ENCODE measurements at regions of chr4 and their contacts with region 1.

Region 1: GRCh38 chr4:108018040-108018883 is 28.6 kb downstream of the HADH start:
- DNase-seq: no peak
- ATAC-seq: peak; percentile 95
- H3K4me3 ChIP-seq: no peak overlapping the region
- H3K27ac ChIP-seq: no peak overlapping the region
- H3K4me1 ChIP-seq: no peaks in the 10 kb centered on the region
- H3K27me3 ChIP-seq: no peaks in the 10 kb centered on the region
- CTCF ChIP-seq: peak; percentile 80 to 90 (median 88)
- EP300 ChIP-seq: no peak
- POLR2A ChIP-seq: no peak
- RAD21 ChIP-seq: peak; percentile 95

Region 2: GRCh38 chr4:107824353-107825071 is 193.8 kb before region 1 on chr4 and contains the start of gene SGMS2:
- CTCF ChIA-PET with region 1: no interaction called
- POLR2A ChIA-PET with region 1: no interaction called
- RAD21 ChIA-PET with region 1: no interaction called
- SMC1A ChIA-PET with region 1: no interaction called
- in situ Hi-C with region 1: no loop called
- intact Hi-C with region 1: no loop called
- DNase-seq: no peak
- ATAC-seq: peak; percentile 49; the same call in 2 of the 3 replicates
- H3K4me3 ChIP-seq: no peak within 1 kb of the TSS
- H3K27ac ChIP-seq: no peak within 1 kb of the TSS
- H3K4me1 ChIP-seq: no peaks in the 10 kb centered on the region
- H3K27me3 ChIP-seq: peaks cover 5 to 15% of the 10 kb centered on the region in 2 experiments
- CTCF ChIP-seq: no peak
- EP300 ChIP-seq: no peak
- POLR2A ChIP-seq: no peak
- RAD21 ChIP-seq: no peak
- polyA plus RNA-seq, gene SGMS2: 0.11 TPM in 1 of 2 experiments, not detected in the other

Region 3: DNA sequence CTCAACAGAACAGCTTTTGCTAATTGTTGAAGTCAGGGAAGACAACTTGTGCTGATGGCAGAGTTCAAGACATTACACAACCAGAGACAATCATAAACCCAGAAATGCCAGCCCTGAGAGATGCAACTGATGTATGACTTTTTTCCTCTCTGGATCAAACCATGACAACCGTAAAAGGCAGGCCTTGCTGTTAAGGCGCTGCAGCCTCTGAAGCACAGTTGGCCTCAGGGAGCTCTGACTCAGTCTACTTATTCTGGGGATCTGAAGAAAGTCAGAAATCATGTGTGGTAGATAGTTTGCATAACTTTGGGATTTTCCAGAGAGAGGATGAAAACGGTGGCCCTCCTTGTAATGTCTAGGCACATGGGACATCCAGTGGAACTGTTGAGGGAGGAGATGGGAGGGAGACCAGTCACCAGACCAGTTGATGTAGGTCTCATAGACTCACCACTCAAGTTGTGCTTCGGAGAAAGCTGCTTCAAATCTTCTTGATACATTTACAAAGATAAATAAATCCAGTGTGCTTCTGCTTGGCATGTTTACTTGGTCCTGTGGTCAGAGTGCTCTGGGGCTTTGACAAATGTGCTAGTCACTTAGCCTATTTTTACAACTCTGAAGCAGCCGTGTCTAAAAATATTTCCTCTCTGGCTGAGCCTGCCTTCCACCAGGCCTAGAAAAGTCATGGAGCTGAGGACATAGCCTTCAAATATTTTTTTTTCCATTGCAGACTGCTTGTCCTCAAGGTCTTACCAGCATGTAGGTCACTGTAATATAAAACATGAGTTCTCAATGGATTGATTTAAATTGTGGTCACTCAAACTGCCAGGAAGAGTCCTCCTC is 21.1 kb before region 1 on chr4:
- CTCF ChIA-PET with region 1: interaction called, 43 read pairs
- POLR2A ChIA-PET with region 1: interaction called, 4 read pairs
- RAD21 ChIA-PET with region 1: interaction called, 43 read pairs
- SMC1A ChIA-PET with region 1: interaction called, 28 read pairs
- in situ Hi-C with region 1: no loop called
- intact Hi-C with region 1: no loop called
- DNase-seq: no peak
- ATAC-seq: no peak
- H3K4me3 ChIP-seq: no peak overlapping the region
- H3K27ac ChIP-seq: no peak overlapping the region
- H3K4me1 ChIP-seq: peaks cover 24% of the 10 kb centered on the region
- H3K27me3 ChIP-seq: no peaks in the 10 kb centered on the region
- CTCF ChIP-seq: no peak
- EP300 ChIP-seq: no peak
- POLR2A ChIP-seq: no peak
- RAD21 ChIP-seq: no peak

Region 4: DNA sequence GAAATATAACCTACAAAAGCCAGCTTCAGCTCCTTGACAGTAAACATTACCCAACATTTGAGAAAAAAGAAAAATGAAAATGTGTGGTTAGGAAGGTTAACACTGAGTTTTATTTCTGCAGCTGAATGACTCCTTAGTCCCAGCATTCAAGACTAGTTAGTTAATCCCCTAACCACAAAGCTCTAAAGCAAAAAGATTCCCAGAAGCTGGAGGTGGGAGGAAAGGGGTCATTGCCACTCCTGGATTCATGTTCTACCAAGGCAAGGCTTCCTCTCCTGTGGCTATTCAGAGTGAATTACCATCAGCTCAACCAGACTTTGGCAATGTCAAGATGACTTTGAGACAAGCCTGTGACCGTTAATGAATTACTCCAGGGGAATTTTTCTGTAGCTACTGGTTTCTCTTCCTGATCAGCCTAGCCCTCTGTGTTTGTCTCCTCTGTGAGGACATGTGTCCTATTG is 35.0 kb after region 1 on chr4:
- CTCF ChIA-PET with region 1: interaction called, 22 read pairs
- POLR2A ChIA-PET with region 1: no interaction called
- RAD21 ChIA-PET with region 1: no interaction called
- SMC1A ChIA-PET with region 1: interaction called, 8 read pairs
- in situ Hi-C with region 1: no loop called
- intact Hi-C with region 1: no loop called
- DNase-seq: no peak
- ATAC-seq: peak; percentile 93
- H3K4me3 ChIP-seq: no peak overlapping the region
- H3K27ac ChIP-seq: no peak overlapping the region
- H3K4me1 ChIP-seq: no peaks in the 10 kb centered on the region
- H3K27me3 ChIP-seq: no peaks in the 10 kb centered on the region
- CTCF ChIP-seq: no peak
- EP300 ChIP-seq: no peak
- POLR2A ChIP-seq: no peak
- RAD21 ChIP-seq: no peak

Region 5: GRCh38 chr4:108155373-108155772 is 137.1 kb after region 1 on chr4:
- CTCF ChIA-PET with region 1: no interaction called
- POLR2A ChIA-PET with region 1: no interaction called
- RAD21 ChIA-PET with region 1: no interaction called
- SMC1A ChIA-PET with region 1: no interaction called
- in situ Hi-C with region 1: no loop called
- intact Hi-C with region 1: no loop called
- DNase-seq: no peak
- ATAC-seq: peak; percentile 61
- H3K4me3 ChIP-seq: no peak overlapping the region
- H3K27ac ChIP-seq: no peak overlapping the region
- H3K4me1 ChIP-seq: no peaks in the 10 kb centered on the region; the same call in 1 of the 2 replicates
- H3K27me3 ChIP-seq: no peaks in the 10 kb centered on the region
- CTCF ChIP-seq: no peak; a peak in 1 of 6 replicates
- EP300 ChIP-seq: 0 out of 4 replicates have a peak, but pooled peaks of 1 of the 2 experiments have one; percentile 7
- POLR2A ChIP-seq: no peak
- RAD21 ChIP-seq: peak; percentile 33; the same call in 1 of the 2 replicates

Region 6: GRCh38 chr4:108492816-108493595 is 474.7 kb after region 1 on chr4:
- CTCF ChIA-PET with region 1: interaction called, 17 read pairs
- POLR2A ChIA-PET with region 1: no interaction called
- RAD21 ChIA-PET with region 1: no interaction called
- SMC1A ChIA-PET with region 1: interaction called, 11 read pairs
- in situ Hi-C with region 1: loop called (anchors 10 kb)
- intact Hi-C with region 1: loop called (anchors 1 kb)
- DNase-seq: no peak
- ATAC-seq: peak; percentile 95
- H3K4me3 ChIP-seq: no peak overlapping the region
- H3K27ac ChIP-seq: no peak overlapping the region
- H3K4me1 ChIP-seq: no peaks in the 10 kb centered on the region
- H3K27me3 ChIP-seq: no peaks in the 10 kb centered on the region
- CTCF ChIP-seq: peak; percentile 41 to 63 (median 47); a peak in 5 of 6 replicates
- EP300 ChIP-seq: no peak
- POLR2A ChIP-seq: no peak
- RAD21 ChIP-seq: peak; percentile 57